Naive thymus-derived CD4-positive, alpha-beta T cell (primary cell): ENCODE measurements at regions of chr6 and their contacts with region 1.

Region 1: GRCh38 chr6:32195652-32195901 is 3.1 kb upstream of the GPSM3 start:
- DNase-seq: peak; percentile 94 to 100 (median 98)
- ATAC-seq: peak; percentile 89
- H3K4me3 ChIP-seq: peak overlapping the region; percentile 98
- H3K4me3 Mint-ChIP-seq: peak overlapping the region; percentile 92 to 99 (median 97)
- H3K27ac ChIP-seq: peak overlapping the region; percentile 97
- H3K27ac Mint-ChIP-seq: peak overlapping the region; percentile 86 to 99 (median 97)
- H3K4me1 ChIP-seq: peaks cover 20 to 29% of the 10 kb centered on the region in 2 donors
- H3K4me1 Mint-ChIP-seq: peaks cover 24 to 40% (median 31%) of the 10 kb centered on the region in 7 donors
- H3K27me3 ChIP-seq: no peaks in the 10 kb centered on the region
- H3K27me3 Mint-ChIP-seq: no peaks in the 10 kb centered on the region

Region 2: GRCh38 chr6:31158140-31158862 is 1037.3 kb before region 1 on chr6 and contains the start of gene TCF19:
- CTCF ChIA-PET with region 1: no interaction called
- POLR2A ChIA-PET with region 1: no interaction called
- intact Hi-C with region 1: loop called in 1 of 2 experiments (anchors 2 kb)
- DNase-seq: peak; percentile 97 to 99 (median 98)
- ATAC-seq: peak; percentile 96
- H3K4me3 ChIP-seq: peak within 1 kb of the TSS; percentile 82
- H3K4me3 Mint-ChIP-seq: peak within 1 kb of the TSS; percentile 82 to 97 (median 91)
- H3K27ac ChIP-seq: peak within 1 kb of the TSS; percentile 82
- H3K27ac Mint-ChIP-seq: peak within 1 kb of the TSS; percentile 62 to 96 (median 89)
- H3K4me1 ChIP-seq: peaks cover 12 to 18% of the 10 kb centered on the region in 2 donors
- H3K4me1 Mint-ChIP-seq: peaks cover 21 to 56% (median 29%) of the 10 kb centered on the region in 7 donors
- H3K27me3 ChIP-seq: no peaks in the 10 kb centered on the region
- H3K27me3 Mint-ChIP-seq: peaks cover 0 to 2% (median 0%) of the 10 kb centered on the region in 5 donors
- total RNA-seq, gene TCF19: 4.3 to 78.9 (median 9.4) TPM

Region 3: DNA sequence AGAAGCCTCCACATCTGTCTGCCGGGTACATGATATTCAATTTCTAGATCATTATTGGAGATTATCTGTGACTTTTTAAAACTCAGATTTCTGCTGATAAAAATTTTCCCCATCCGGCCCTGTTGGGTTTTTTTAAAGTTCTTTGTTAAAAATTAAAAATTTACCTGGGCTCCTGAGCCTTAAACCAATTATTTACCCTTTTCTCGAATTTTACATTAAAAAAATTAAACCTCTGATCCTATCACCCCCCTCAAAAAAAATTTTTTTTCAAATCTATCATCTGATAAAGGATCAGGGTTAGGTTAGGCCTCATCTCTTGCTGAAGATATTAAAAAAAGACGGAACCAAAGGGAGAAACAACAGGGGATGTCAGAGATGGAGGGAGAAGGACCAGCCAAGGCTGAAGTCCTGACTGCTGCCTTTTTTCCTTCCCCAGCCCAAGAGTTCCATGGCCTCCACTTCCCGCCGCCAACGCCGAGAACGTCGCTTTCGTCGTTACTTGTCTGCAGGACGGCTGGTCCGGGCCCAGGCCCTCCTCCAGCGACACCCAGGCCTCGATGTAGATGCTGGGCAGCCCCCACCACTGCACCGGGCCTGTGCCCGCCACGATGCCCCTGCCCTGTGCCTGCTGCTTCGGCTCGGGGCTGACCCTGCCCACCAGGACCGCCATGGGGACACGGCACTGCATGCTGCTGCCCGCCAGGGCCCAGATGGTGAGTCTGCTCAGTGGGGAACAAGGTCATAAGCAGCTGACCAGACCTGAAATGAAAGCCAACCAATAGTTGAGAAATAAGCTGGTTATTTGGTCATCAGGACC is 647.6 kb before region 1 on chr6:
- CTCF ChIA-PET with region 1: no interaction called
- POLR2A ChIA-PET with region 1: no interaction called
- intact Hi-C with region 1: no loop called
- DNase-seq: no peak
- ATAC-seq: no peak
- H3K4me3 ChIP-seq: peak overlapping the region; percentile 68
- H3K4me3 Mint-ChIP-seq: peak overlapping the region; percentile 81 to 97 (median 91)
- H3K27ac ChIP-seq: peak overlapping the region; percentile 89
- H3K27ac Mint-ChIP-seq: peak overlapping the region; percentile 78 to 98 (median 95)
- H3K4me1 ChIP-seq: peaks cover 16 to 25% of the 10 kb centered on the region in 2 donors
- H3K4me1 Mint-ChIP-seq: peaks cover 22 to 49% (median 43%) of the 10 kb centered on the region in 7 donors
- H3K27me3 ChIP-seq: no peaks in the 10 kb centered on the region
- H3K27me3 Mint-ChIP-seq: no peaks in the 10 kb centered on the region

Region 4: DNA sequence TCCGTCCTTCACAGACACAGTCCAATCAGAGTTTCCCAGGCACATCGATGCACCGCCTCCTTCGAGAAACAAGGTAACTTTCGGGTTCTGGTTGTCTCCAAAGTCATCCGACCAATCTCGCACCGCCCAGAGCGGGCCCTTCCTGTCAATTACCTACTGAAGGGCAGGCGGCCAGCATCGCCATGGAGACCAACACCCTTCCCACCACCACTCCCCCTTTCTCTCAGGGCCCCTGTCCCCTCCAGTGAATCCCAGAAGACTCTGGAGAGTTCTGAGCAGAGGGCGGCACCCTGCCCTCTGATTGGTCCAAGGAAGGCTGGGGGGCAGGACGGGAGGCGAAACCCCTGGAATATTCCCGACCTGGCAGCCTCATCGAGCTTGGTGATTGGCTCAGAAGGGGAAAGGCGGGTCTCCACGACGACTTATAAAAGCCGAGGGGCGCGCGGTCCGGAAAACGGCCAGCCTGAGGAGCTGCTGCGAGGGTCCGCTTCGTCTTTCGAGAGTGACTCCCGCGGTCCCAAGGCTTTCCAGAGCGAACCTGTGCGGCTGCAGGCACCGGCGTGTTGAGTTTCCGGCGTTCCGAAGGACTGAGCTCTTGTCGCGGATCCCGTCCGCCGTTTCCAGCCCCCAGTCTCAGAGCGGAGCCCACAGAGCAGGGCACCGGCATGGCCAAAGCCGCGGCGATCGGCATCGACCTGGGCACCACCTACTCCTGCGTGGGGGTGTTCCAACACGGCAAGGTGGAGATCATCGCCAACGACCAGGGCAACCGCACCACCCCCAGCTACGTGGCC is 368.1 kb before region 1 on chr6 and contains the start of gene HSPA1B:
- CTCF ChIA-PET with region 1: no interaction called
- POLR2A ChIA-PET with region 1: no interaction called
- intact Hi-C with region 1: loop called (anchors 1 to 10 kb)
- DNase-seq: peak; percentile 55 to 96 (median 82)
- ATAC-seq: peak; percentile 80
- H3K4me3 ChIP-seq: peak within 1 kb of the TSS; percentile 74
- H3K4me3 Mint-ChIP-seq: peak within 1 kb of the TSS; percentile 85 to 97 (median 90)
- H3K27ac ChIP-seq: peak within 1 kb of the TSS; percentile 72
- H3K27ac Mint-ChIP-seq: peak within 1 kb of the TSS; percentile 93 to 99 (median 97)
- H3K4me1 ChIP-seq: peaks cover 12 to 17% of the 10 kb centered on the region in 2 donors
- H3K4me1 Mint-ChIP-seq: peaks cover 11 to 51% (median 46%) of the 10 kb centered on the region in 7 donors
- H3K27me3 ChIP-seq: no peaks in the 10 kb centered on the region
- H3K27me3 Mint-ChIP-seq: no peaks in the 10 kb centered on the region
- total RNA-seq, gene HSPA1B: 8.6 to 68.9 (median 28.9) TPM

Region 5: GRCh38 chr6:32118782-32119628 is 76.6 kb before region 1 on chr6:
- CTCF ChIA-PET with region 1: interaction called, 4 read pairs
- POLR2A ChIA-PET with region 1: interaction called, 6 read pairs
- intact Hi-C with region 1: loop called (anchors 1 to 2 kb)
- DNase-seq: peak; percentile 50 to 73 (median 62)
- ATAC-seq: peak; percentile 89
- H3K4me3 ChIP-seq: no peak overlapping the region
- H3K4me3 Mint-ChIP-seq: no peak overlapping the region
- H3K27ac ChIP-seq: no peak overlapping the region
- H3K27ac Mint-ChIP-seq: peak overlapping the region in 8 of 9 donors; percentile 10 to 81 (median 68)
- H3K4me1 ChIP-seq: no peaks in the 10 kb centered on the region
- H3K4me1 Mint-ChIP-seq: peaks cover 5 to 24% (median 18%) of the 10 kb centered on the region in 7 donors
- H3K27me3 ChIP-seq: no peaks in the 10 kb centered on the region
- H3K27me3 Mint-ChIP-seq: no peaks in the 10 kb centered on the region

Region 6: DNA sequence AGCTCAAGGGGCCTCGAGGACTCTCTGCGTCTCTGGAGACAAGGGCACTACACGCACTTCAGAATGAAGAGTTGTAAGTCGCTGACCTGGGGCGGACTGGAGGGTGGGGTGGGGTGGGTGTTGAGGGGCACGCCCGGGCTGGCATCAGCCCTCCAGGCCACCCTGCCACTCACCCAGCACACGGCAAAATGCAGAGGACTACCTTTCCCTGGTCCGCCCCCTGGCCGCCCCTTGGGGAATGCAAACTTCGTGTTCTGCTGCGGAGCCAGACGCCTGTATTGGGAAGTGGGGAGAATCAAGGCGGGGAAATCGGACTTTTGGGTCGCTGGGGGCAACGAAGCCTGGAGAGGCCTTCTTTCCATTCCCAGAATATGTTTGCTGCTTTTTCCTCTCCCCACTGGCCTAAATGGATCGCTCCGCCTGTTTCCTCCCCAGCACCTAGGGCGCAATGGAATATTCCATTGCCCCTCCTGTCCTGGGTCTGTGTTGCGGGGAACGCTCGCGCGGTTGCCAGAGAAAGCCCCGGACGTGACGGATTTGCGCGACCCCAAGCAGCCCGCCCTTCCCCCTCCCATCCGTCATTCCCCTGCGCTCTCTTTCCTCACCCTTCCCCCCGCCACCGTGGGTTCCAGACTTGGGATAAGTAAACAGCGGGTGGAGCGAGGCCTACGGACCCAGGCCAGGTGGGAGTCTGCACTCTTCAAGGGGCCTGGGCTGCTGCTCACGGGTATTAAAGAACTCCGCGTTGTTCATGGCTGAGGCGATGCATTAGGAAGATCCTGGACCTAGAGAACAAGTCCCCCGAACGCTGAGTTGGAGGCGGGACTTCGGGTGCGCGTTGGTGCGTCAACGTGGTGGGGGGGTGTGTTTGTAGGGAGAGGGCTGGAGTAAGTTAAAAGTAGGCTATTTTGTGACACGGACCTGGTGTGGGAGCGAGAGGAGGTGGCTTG is 41.7 kb before region 1 on chr6 and contains the start of gene PPT2:
- CTCF ChIA-PET with region 1: interaction called, 6 read pairs
- POLR2A ChIA-PET with region 1: interaction called, 9 read pairs
- intact Hi-C with region 1: loop called (anchors 1 kb)
- DNase-seq: peak; percentile 34 to 85 (median 72)
- ATAC-seq: peak; percentile 82
- H3K4me3 ChIP-seq: peak within 1 kb of the TSS; percentile 68
- H3K4me3 Mint-ChIP-seq: peak within 1 kb of the TSS; percentile 87 to 100 (median 98)
- H3K27ac ChIP-seq: peak within 1 kb of the TSS; percentile 82
- H3K27ac Mint-ChIP-seq: peak within 1 kb of the TSS; percentile 87 to 98 (median 92)
- H3K4me1 ChIP-seq: peaks cover 10 to 35% of the 10 kb centered on the region in 2 donors
- H3K4me1 Mint-ChIP-seq: peaks cover 42 to 74% (median 65%) of the 10 kb centered on the region in 7 donors
- H3K27me3 ChIP-seq: no peaks in the 10 kb centered on the region
- H3K27me3 Mint-ChIP-seq: peaks cover 0 to 34% (median 12%) of the 10 kb centered on the region in 5 donors
- total RNA-seq, gene PPT2: 11.8 to 21.9 (median 15.8) TPM

Region 7: GRCh38 chr6:32393665-32394420 is 198.3 kb after region 1 on chr6:
- CTCF ChIA-PET with region 1: no interaction called
- POLR2A ChIA-PET with region 1: no interaction called
- intact Hi-C with region 1: no loop called
- DNase-seq: no peak
- ATAC-seq: no peak
- H3K4me3 ChIP-seq: no peak overlapping the region
- H3K4me3 Mint-ChIP-seq: no peak overlapping the region
- H3K27ac ChIP-seq: no peak overlapping the region
- H3K27ac Mint-ChIP-seq: no peak overlapping the region
- H3K4me1 ChIP-seq: no peaks in the 10 kb centered on the region
- H3K4me1 Mint-ChIP-seq: peaks cover 0 to 4% (median 0%) of the 10 kb centered on the region in 7 donors
- H3K27me3 ChIP-seq: no peaks in the 10 kb centered on the region
- H3K27me3 Mint-ChIP-seq: peaks cover 7 to 46% (median 18%) of the 10 kb centered on the region in 5 donors

Region 8: DNA sequence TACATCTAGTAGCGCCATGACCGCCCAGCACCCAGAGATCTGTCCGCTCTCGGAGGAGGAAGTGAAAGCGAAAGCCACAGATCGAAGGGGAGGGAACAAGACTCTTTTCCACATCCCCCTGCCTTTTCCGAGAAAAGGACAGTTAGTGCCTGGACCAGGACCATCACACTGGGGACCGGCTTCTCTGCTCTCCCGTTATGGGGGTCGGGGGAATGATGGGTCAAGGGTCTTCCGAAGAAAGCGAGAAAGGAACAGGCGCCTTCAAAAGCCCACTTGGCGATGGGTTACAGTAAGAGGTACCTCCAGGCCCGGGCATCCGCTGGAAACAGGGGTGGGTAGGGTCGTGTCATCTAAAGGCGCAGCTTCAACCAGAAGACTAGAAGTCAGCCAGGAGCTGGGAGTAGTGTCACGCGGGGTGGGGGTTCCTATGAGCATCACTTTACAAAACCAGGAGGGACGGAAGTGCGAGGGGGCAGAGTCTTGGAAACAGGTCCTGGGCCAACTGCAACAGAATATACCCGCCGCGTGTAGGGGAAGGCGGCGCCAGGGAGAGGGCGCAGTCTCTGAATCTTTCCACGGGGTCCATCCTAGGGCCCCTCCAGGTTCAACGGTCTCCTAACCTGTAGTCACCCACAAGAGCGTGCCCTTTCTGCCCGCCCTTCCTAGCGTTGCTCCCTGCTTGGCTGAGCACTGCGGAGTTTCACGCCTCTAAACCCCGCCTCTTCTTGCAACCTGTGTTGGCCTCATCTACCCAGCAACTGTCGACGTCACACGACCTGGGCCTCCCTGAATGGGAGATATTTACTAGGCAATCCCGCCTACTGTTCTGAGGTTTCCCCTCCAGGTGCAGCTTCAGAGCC is 648.6 kb after region 1 on chr6 and contains the start of gene PSMB8:
- CTCF ChIA-PET with region 1: interaction called, 3 read pairs
- POLR2A ChIA-PET with region 1: interaction called, 7 read pairs
- intact Hi-C with region 1: loop called (anchors 1 to 2 kb)
- DNase-seq: peak; percentile 92 to 99 (median 97)
- ATAC-seq: peak; percentile 90
- H3K4me3 ChIP-seq: peak within 1 kb of the TSS; percentile 97
- H3K4me3 Mint-ChIP-seq: peak within 1 kb of the TSS; percentile 92 to 99 (median 98)
- H3K27ac ChIP-seq: peak within 1 kb of the TSS; percentile 97
- H3K27ac Mint-ChIP-seq: peak within 1 kb of the TSS; percentile 99 to 100 (median 100)
- H3K4me1 ChIP-seq: peaks cover 71 to 72% of the 10 kb centered on the region in 2 donors
- H3K4me1 Mint-ChIP-seq: peaks cover 66 to 83% (median 79%) of the 10 kb centered on the region in 7 donors
- H3K27me3 ChIP-seq: no peaks in the 10 kb centered on the region
- H3K27me3 Mint-ChIP-seq: no peaks in the 10 kb centered on the region
- total RNA-seq, gene PSMB8: 111 to 419 (median 115) TPM

Region 9: DNA sequence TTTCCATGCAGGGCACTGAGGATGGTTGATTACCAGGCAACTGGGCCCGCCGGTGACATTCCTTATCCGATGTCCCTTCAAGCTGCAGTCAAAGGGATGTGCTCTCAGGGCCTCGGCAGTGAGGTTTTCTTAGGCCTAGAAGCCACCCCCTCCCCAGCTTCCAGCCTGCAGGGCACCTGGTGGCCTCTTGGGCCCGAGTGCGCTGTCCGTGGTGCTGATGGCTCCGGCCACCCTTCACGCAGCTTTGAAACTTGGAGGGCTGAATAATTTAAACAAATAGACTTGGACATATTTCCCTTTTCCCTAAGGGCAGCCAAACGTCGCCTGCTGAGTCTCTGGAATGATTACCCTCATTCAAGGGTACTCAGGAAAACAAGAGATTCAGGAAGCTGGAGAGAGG is 1617.1 kb after region 1 on chr6:
- CTCF ChIA-PET with region 1: no interaction called
- POLR2A ChIA-PET with region 1: no interaction called
- intact Hi-C with region 1: no loop called
- DNase-seq: peak in 4 of 9 donors; percentile 22 to 61 (median 26)
- ATAC-seq: no peak
- H3K4me3 ChIP-seq: no peak overlapping the region
- H3K4me3 Mint-ChIP-seq: no peak overlapping the region
- H3K27ac ChIP-seq: no peak overlapping the region
- H3K27ac Mint-ChIP-seq: no peak overlapping the region
- H3K4me1 ChIP-seq: peaks cover 5 to 7% of the 10 kb centered on the region in 2 donors
- H3K4me1 Mint-ChIP-seq: peaks cover 10 to 22% (median 17%) of the 10 kb centered on the region in 7 donors
- H3K27me3 ChIP-seq: peaks cover 0 to 6% of the 10 kb centered on the region in 2 donors
- H3K27me3 Mint-ChIP-seq: peaks cover 30 to 68% (median 61%) of the 10 kb centered on the region in 5 donors